ENCODE measurements at regions of chr1 and their contacts with region 1.

Region 1: DNA sequence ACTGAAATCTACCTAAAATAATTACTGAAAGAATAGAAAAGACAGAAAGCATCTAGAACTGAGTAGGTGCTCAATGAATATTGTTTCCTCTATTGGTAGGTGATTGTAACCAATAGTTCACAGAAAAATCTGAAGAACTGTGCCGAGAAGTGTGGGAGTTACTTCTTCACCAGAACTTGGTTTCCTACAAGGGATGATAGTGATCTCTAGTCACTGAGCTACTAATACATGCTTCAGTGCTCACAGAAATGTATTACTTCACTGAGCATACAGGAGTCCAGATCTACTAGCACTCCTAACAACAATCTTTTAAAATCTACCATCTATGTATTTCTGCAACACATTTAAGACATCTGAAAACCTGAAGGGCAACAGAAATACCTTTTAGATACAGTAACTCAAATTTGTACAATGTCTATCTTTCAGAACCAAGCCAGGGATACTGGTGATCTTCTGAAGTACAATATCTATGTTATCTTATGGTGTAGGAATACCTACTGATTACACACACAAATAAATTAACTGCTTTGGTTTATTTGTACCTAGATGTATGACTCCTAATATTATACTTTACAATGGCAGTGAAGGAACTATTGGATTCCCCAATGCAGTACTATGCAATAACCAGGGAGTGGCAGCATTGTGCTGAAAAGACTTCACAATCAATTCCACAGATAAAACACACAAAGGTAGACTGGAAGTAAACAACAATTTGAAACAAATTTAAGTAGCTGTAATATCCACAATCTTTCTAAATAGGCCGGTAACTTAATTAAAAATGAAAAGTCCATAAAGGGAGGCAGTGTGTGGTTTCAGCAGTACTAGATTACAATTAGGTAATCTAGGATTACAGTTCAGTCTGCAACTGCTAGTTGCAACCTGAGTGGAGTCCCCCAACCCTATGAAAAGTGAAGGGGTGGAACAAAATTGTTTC is 243.0 kb downstream of the SLC45A1 start:
- DNase-seq: no peak

Region 2: GRCh38 chr1:8482979-8483391 is 77.9 kb before region 1 on chr1:
- intact Hi-C with region 1: no loop called
- DNase-seq: no peak

Region 3: GRCh38 chr1:8607906-8608305 is 47.0 kb after region 1 on chr1:
- intact Hi-C with region 1: loop called (anchors 10 kb)
- DNase-seq: no peak

Region 4: GRCh38 chr1:8671306-8671917 is 110.5 kb after region 1 on chr1:
- intact Hi-C with region 1: loop called (anchors 1 kb)
- DNase-seq: no peak

Region 5: DNA sequence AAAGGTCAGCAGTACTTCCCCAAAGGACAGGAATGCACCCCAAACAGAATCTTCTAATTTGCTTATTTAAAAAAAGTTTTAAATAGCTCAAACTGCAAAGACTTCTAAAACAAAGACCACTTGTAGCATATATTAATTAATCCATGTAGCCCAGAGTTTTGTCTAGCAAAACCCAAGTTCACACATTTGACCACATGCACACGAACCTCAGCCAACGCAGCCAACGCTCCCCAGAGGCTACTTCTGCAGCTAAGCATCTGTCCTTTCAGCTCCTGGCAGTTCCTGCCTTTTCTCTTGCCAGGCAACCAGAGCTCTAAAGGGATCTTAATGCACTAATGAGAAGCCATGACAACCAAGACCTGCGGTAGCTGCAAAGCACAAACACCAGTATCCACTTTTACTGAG is 166.9 kb after region 1 on chr1:
- intact Hi-C with region 1: loop called (anchors 2 kb)
- DNase-seq: no peak

Region 6: GRCh38 chr1:8848663-8849386 is 287.9 kb after region 1 on chr1:
- intact Hi-C with region 1: loop called (anchors 5 kb)
- DNase-seq: peak; percentile 94

Measured in cardiac septum (tissue), 1 donor.